Endothelial cell of umbilical vein (primary cell): ENCODE measurements at regions of chr9 and their contacts with region 1.

Region 1: DNA sequence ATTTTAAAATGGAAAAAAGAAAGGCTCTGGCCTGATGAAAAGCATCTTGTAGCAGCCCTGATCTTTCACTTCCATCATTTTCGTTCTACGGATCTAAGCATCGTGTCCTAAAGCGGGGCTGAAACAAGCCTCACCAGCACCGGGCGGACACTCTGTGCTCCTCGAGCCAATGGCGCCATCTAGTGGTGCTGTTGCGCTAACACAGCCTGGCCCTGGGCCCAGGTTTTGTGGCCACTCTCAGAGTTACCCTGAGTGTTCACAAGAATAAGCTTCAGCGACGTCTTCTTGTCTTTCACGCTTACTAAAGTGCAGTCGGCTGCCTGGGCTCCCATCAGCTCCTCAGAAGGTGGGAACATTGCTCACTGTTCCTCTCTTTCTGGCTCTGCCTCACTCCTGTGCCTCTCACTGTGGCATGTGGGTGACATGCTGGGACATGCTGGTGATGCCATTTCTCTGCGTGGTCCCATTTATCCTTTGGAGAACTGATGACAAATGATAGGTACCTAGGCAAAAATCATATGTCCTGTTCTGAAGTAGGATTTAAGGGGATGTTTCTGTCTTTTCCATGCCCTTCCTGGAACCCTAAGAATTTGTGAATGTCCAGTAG is 32.7 kb downstream of the DMRT3 start:
- DNase-seq: peak; percentile 69
- H3K4me3 ChIP-seq: no peak overlapping the region
- H3K27ac ChIP-seq: no peak overlapping the region
- H3K4me1 ChIP-seq: no peaks in the 10 kb centered on the region
- H3K27me3 ChIP-seq: no peaks in the 10 kb centered on the region
- CTCF ChIP-seq: peak; percentile 90 to 95
- POLR2A ChIP-seq: no peak

Region 2: DNA sequence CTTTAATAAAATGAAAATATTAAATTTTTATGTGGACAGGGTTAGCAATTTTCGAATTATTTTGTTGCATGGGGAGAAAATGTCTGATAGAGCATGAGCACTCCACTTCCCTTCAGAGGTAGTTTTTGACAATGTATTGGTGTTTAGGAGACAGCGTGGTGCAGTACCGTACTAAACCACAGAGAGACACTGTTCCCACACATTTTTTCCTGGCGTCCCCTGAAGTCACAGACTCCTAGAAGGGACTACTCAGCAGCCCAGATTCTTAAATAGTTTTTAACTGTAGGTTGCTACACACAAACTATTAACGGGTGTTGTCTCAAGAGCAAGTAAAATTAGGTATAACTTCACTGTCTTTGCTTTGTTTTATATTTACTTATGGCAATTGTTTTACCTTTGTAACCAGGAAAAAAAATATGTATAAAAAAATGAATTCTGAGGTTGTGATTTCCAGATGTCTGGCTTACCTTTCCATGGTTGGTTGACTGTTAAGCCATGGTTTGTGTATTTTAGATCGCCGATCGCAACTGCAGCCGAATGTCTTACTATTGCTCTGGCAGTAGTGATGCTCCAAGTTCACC is 623.3 kb before region 1 on chr9:
- CTCF ChIA-PET with region 1: interaction called, 14 read pairs
- POLR2A ChIA-PET with region 1: no interaction called
- dilution Hi-C with region 1: no loop called
- intact Hi-C with region 1: loop called (anchors 1 kb)
- DNase-seq: peak; percentile 76
- H3K4me3 ChIP-seq: no peak overlapping the region
- H3K27ac ChIP-seq: no peak overlapping the region
- H3K4me1 ChIP-seq: no peaks in the 10 kb centered on the region
- H3K27me3 ChIP-seq: no peaks in the 10 kb centered on the region
- CTCF ChIP-seq: peak; percentile 73 to 79
- POLR2A ChIP-seq: no peak

Region 3: DNA sequence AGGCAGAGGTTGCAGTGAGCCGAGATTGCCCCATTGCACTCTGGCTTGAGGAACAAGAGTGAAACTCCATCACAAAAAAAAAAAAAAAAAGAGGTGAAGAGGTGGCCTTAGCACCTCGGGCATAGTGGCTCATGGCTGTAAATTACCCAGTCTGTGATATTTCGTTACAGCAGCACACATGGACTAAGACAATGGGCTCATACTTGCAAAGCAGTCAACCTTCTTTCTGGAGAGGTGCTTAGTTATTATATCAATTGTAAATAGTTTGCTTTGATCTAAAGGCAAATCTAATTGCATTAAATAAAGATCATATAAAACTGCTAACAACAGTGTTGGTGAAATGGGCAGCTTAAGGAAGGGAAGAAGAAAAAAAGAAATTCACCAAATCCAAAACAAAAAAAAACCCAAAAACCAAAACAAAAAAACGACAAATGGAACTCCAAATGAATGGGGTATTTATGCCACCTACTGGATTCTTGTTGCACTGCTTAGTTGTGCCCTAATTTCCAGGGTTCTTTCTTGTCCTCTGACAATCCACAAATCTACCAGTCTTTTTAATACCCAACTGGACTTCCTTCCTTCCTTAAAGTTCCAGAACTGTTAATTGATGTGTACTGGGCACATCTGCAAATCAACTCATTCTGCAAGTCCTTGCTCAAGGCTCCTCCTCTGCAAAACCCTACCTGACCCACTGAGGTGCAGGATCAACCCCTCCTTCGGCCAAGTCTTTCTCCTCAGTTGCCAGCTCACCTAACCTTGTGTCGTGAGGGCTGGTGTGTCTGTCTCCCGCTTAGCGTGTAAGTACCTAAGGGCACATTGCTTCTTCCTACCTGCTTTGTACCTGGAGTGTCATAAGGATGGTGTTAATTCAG is 202.7 kb before region 1 on chr9:
- CTCF ChIA-PET with region 1: interaction called, 5 read pairs
- POLR2A ChIA-PET with region 1: no interaction called
- dilution Hi-C with region 1: no loop called
- intact Hi-C with region 1: loop called (anchors 5 kb)
- DNase-seq: peak; percentile 50
- H3K4me3 ChIP-seq: no peak overlapping the region
- H3K27ac ChIP-seq: no peak overlapping the region
- H3K4me1 ChIP-seq: peaks cover 33% of the 10 kb centered on the region
- H3K27me3 ChIP-seq: no peaks in the 10 kb centered on the region
- CTCF ChIP-seq: peak; percentile 56 to 68
- POLR2A ChIP-seq: no peak

Region 4: GRCh38 chr9:899440-900184 is 109.6 kb before region 1 on chr9:
- CTCF ChIA-PET with region 1: interaction called, 50 read pairs
- POLR2A ChIA-PET with region 1: no interaction called
- dilution Hi-C with region 1: no loop called
- intact Hi-C with region 1: no loop called
- DNase-seq: no peak
- H3K4me3 ChIP-seq: no peak overlapping the region
- H3K27ac ChIP-seq: no peak overlapping the region
- H3K4me1 ChIP-seq: no peaks in the 10 kb centered on the region
- H3K27me3 ChIP-seq: peaks cover 2 to 3% of the 10 kb centered on the region in 2 experiments
- CTCF ChIP-seq: no peak
- POLR2A ChIP-seq: no peak

Region 5: GRCh38 chr9:994005-994404 is 15.2 kb before region 1 on chr9:
- CTCF ChIA-PET with region 1: interaction called, 12 read pairs
- POLR2A ChIA-PET with region 1: no interaction called
- dilution Hi-C with region 1: no loop called
- intact Hi-C with region 1: no loop called
- DNase-seq: no peak
- H3K4me3 ChIP-seq: no peak overlapping the region
- H3K27ac ChIP-seq: no peak overlapping the region
- H3K4me1 ChIP-seq: no peaks in the 10 kb centered on the region
- H3K27me3 ChIP-seq: no peaks in the 10 kb centered on the region
- CTCF ChIP-seq: no peak
- POLR2A ChIP-seq: no peak

Region 6: DNA sequence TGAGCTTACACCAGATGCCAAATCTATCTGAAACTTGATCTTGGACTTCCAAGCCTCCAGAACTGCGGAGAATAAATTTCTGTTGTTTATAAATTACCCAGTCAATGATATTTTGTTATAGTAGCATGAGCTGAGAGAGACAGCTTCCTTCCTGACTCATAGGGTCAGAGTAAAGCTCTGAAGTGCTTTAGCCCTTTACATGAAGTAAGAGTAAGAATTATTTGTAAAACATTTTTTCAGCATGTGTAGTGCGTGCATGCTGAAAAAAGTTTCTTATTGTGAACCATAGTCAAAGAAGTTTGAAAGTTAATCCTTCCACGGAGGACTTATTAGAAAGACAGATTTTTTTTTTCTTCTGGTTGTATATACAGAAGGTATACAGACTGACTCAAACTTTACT is 213.3 kb after region 1 on chr9:
- CTCF ChIA-PET with region 1: no interaction called
- POLR2A ChIA-PET with region 1: no interaction called
- dilution Hi-C with region 1: no loop called
- intact Hi-C with region 1: no loop called
- DNase-seq: no peak
- H3K4me3 ChIP-seq: no peak overlapping the region
- H3K27ac ChIP-seq: no peak overlapping the region
- H3K4me1 ChIP-seq: no peaks in the 10 kb centered on the region
- H3K27me3 ChIP-seq: no peaks in the 10 kb centered on the region
- CTCF ChIP-seq: no peak
- POLR2A ChIP-seq: no peak